ENCODE measurements at regions of chr1 and their contacts with region 1.

Region 1: GRCh38 chr1:150730130-150730721 is 9.5 kb upstream of the HORMAD1 start:
- DNase-seq: no peak
- H3K4me3 ChIP-seq: no peak overlapping the region
- H3K4me3 Mint-ChIP-seq: no peak overlapping the region
- H3K27ac ChIP-seq: peak overlapping the region in 1 of 2 donors; percentile 11
- H3K27ac Mint-ChIP-seq: peak overlapping the region in 2 of 7 donors; percentile 82
- H3K4me1 ChIP-seq: no peaks in the 10 kb centered on the region
- H3K4me1 Mint-ChIP-seq: no peaks in the 10 kb centered on the region
- H3K27me3 ChIP-seq: no peaks in the 10 kb centered on the region
- H3K27me3 Mint-ChIP-seq: no peaks in the 10 kb centered on the region
- CTCF ChIP-seq: no peak

Region 2: GRCh38 chr1:150944856-150945255 is 214.6 kb after region 1 on chr1:
- intact Hi-C with region 1: loop called in 1 of 2 experiments (anchors 5 kb)
- DNase-seq: no peak
- H3K4me3 ChIP-seq: no peak overlapping the region
- H3K4me3 Mint-ChIP-seq: no peak overlapping the region
- H3K27ac ChIP-seq: no peak overlapping the region
- H3K27ac Mint-ChIP-seq: peak overlapping the region in 1 of 7 donors; percentile 21
- H3K4me1 ChIP-seq: no peaks in the 10 kb centered on the region
- H3K4me1 Mint-ChIP-seq: no peaks in the 10 kb centered on the region
- H3K27me3 ChIP-seq: no peaks in the 10 kb centered on the region
- H3K27me3 Mint-ChIP-seq: no peaks in the 10 kb centered on the region
- CTCF ChIP-seq: no peak

Measured in CD14-positive monocyte (primary cell).